ENCODE measurements at regions of chr4 and their contacts with region 1.

Region 1: DNA sequence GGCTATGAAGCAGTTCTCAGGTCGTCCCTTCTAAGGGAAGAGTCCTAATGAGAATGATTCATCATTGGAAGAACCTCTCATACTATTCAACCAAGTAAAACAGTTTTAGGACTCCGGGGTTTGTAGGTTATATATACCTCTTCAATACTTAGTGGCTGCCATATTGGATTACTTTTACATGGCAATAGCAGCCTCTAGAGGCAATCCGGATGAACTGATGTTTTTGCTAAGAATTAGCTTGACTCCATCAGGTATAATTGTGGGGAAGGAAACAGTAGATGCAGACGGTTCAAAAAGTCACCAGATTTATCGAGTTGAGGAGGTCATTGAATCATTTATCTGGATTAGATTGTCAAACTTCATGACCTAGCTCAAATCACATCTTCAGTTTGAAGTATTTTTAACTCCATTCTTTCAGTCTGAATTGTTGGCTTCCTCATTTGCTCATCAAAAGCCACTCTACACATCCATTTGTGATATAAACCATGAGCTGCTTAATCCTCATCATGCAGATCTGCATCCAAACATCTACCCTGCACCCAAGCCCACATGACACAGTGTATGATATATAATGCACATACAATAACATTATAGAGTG is 28.4 kb downstream of the GUCY1B1 start:
- DNase-seq: no peak
- H3K4me3 ChIP-seq: no peak overlapping the region
- H3K27ac ChIP-seq: no peak overlapping the region
- H3K4me1 ChIP-seq: peaks cover 0 to 5% (median 3%) of the 10 kb centered on the region in 3 donors
- H3K27me3 ChIP-seq: no peaks in the 10 kb centered on the region
- CTCF ChIP-seq: peak in 5 of 6 experiments; percentile 56 to 83 (median 62)
- POLR2A ChIP-seq: no peak

Region 2: GRCh38 chr4:155442267-155443105 is 344.7 kb before region 1 on chr4:
- intact Hi-C with region 1: loop called (anchors 5 kb)
- DNase-seq: no peak
- H3K4me3 ChIP-seq: peak overlapping the region in 1 of 4 donors; percentile 21
- H3K27ac ChIP-seq: peak overlapping the region in 2 of 4 donors; percentile 23 to 25
- H3K4me1 ChIP-seq: peaks cover 0 to 8% (median 0%) of the 10 kb centered on the region in 3 donors
- H3K27me3 ChIP-seq: peaks cover 0 to 9% (median 0%) of the 10 kb centered on the region in 4 donors
- CTCF ChIP-seq: peak; percentile 48 to 97 (median 88)
- POLR2A ChIP-seq: no peak

Region 3: DNA sequence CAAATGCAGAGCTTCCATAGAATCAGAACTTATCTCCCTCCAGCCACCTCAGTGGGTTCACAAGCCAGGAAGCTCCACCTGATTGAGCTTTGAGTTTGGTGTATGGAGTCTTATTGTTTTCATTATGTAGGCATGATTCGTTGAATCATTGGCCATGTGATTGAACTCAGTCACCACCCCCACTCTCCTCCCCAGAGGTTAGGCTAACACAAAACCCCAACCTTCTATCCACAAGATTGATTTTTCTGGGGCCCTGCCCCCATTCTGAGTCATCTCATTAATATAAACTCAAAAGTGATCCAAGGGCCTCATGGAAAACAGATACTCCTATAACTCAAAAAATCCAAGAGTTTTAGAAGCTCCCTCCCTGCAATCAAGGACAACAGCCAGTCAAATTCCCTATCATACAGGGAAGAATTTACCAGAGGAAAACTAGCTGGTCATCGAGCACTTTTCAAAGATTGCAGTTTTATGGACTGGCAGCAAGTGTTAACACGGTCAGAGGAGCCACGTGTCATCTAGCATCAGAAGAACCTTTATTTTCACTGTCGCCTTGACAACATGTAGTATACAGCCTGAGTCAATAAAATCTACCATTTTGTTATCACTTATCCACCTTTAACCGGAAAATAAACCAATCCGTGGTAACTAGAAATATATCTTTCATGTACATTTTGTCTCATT is 64.3 kb before region 1 on chr4:
- intact Hi-C with region 1: no loop called
- DNase-seq: no peak
- H3K4me3 ChIP-seq: no peak overlapping the region
- H3K27ac ChIP-seq: no peak overlapping the region
- H3K4me1 ChIP-seq: no peaks in the 10 kb centered on the region
- H3K27me3 ChIP-seq: peaks cover 0 to 3% (median 0%) of the 10 kb centered on the region in 4 donors
- CTCF ChIP-seq: no peak
- POLR2A ChIP-seq: no peak

Region 4: GRCh38 chr4:156118507-156119220 is 331.5 kb after region 1 on chr4:
- intact Hi-C with region 1: no loop called
- DNase-seq: no peak
- H3K4me3 ChIP-seq: no peak overlapping the region
- H3K27ac ChIP-seq: no peak overlapping the region
- H3K4me1 ChIP-seq: no peaks in the 10 kb centered on the region
- H3K27me3 ChIP-seq: no peaks in the 10 kb centered on the region
- CTCF ChIP-seq: no peak
- POLR2A ChIP-seq: no peak